BJ (cell line): ENCODE measurements at regions of chr17 and their contacts with region 1.

Region 1: GRCh38 chr17:57875309-57876115 is 25.7 kb upstream of the MRPS23 start:
- DNase-seq: peak; percentile 90
- H3K4me3 ChIP-seq: 0 out of 2 replicates have a peak overlapping the region, but pooled peaks have one; percentile 7
- H3K27me3 ChIP-seq: no peaks in the 10 kb centered on the region
- CTCF ChIP-seq: peak; percentile 73

Region 2: GRCh38 chr17:57622683-57623433 is 252.7 kb before region 1 on chr17:
- CTCF ChIA-PET with region 1: no interaction called
- POLR2A ChIA-PET with region 1: no interaction called
- DNase-seq: peak; percentile 19
- H3K4me3 ChIP-seq: no peak overlapping the region
- H3K27me3 ChIP-seq: no peaks in the 10 kb centered on the region
- CTCF ChIP-seq: no peak

Region 3: DNA sequence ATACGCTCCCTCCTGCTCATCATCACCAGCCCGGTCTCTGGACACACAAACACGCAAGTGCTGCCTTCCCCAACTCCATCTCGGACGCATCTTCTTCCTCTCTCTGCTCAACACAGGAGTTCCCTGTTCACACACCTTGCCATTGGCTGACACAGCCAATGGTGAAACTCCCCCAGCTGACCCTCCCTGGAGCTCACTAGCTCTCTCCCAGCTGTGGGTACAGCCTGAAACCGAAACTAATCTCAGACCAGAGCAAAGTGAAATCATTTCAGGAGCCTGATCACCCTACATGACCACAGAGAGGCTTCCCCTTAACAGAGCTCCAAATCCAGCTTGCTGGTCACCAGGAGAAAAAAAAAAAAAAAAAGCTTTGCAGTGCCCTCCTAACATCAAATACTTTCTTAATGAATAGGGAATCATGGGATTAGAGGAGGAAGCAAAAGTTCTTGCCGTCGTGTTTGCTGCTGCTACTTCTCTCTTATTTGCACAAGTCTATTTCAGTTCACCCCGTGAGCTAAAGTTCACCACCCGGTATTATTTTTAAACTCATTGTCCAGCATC is 71.4 kb after region 1 on chr17:
- CTCF ChIA-PET with region 1: interaction called, 30 read pairs
- POLR2A ChIA-PET with region 1: no interaction called
- DNase-seq: no peak
- H3K4me3 ChIP-seq: peak overlapping the region; percentile 37
- H3K27me3 ChIP-seq: no peaks in the 10 kb centered on the region
- CTCF ChIP-seq: no peak